AG04449 (cell line): ENCODE measurements at regions of chr20 and their contacts with region 1.

Region 1: DNA sequence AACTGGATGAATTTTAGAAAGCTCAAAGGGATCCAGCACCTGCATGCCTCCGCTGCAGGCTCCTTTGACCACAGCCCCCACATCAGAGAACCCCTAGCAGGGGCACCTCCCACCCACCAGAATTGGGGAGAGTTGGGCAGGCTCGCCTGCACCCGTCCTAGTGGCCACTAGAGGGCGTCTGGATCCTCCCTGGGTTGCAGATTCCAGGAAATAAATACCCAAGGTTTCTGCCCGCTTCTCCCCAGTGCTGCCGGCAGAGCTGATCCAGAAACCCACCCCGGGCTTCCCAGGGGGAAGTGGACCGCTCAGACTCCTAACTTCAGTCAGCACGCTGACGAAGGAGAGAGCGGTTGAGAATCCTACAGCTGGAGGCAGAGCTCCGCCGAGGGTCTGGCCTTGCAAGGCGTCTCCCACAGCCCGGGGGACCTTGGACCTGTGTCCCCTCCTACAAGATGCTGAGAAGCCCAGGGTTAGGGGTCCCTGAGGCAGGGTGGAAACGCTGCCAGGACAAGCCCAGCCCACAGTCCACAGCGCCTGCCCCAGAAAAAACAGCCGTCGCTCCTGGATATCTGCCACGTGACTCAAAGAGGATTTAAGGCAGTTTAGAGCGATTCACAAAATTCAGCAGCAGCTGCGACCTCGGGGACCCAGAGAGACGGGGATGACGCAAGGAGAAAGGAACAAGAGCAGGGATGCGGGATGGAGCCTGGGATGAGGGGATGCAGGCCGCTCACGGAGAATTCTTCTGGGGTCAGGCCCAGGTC is 32.6 kb upstream of the PHACTR3 start:
- DNase-seq: no peak
- H3K4me3 ChIP-seq: peak overlapping the region; percentile 46
- CTCF ChIP-seq: peak; percentile 91

Region 2: GRCh38 chr20:59560588-59561227 is 11.0 kb before region 1 on chr20:
- CTCF ChIA-PET with region 1: interaction called, 57 read pairs
- POLR2A ChIA-PET with region 1: no interaction called
- DNase-seq: no peak
- H3K4me3 ChIP-seq: no peak overlapping the region
- CTCF ChIP-seq: peak; percentile 47

Region 3: DNA sequence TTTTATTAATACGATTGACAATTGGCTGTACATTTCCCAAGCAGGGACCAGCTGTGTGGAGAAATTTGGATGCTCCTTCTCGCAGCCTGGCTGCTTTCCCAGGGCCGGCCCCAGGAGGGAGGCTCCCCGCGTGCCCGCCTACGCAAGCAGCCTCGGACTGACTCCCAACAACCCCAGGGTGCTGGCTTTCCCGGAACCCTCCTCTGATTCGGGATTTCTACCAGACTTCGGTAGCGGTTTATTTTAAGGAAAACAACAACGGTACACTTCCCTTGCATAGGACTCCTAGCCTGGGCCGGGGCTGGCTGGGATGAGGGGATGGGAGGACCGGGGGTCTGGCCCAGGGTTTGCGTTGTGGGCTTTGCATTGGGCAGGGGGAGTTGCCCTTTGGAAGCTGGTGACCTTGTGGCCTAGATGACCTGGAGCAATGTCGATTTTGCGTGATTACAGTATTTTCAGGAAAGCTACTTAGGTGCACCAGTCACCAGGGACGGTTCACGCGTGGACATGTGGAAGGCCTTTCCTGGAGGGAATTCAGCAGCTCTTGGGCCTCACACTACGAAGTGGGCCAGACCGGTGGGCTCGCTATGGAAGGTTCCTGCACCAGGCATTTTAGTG is 11.8 kb after region 1 on chr20:
- CTCF ChIA-PET with region 1: interaction called, 33 read pairs
- POLR2A ChIA-PET with region 1: no interaction called
- DNase-seq: no peak
- H3K4me3 ChIP-seq: no peak overlapping the region
- CTCF ChIP-seq: no peak

Region 4: DNA sequence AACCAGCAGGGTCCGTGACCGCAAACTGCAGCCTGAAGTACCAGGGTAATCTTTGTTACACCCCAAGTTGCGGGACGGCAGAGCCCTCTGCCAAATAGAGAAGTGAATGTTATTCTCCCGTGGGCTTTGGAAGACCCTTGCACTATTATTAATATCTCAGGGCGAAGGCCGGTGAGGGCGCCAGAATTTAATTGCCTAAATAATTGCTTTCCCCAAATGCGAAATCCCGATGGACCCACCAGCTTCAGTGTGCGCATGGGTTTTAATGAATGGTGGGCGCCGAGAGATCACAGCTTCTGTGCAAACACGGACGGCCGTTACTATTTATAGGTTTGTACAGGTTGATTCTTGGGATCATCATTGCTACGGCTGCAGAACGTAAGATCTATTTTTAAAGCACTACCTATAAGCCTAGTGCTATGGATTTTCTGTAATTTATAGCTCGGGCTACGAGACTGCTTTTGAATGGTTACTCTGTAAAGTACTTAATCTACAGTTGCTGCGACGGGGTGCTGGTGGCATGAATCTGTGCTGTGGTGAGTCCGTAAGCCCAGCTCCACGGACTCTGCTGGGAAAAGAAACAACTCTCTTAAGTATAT is 17.5 kb after region 1 on chr20:
- CTCF ChIA-PET with region 1: interaction called, 21 read pairs
- POLR2A ChIA-PET with region 1: no interaction called
- DNase-seq: no peak
- H3K4me3 ChIP-seq: no peak overlapping the region
- CTCF ChIP-seq: no peak

Region 5: GRCh38 chr20:59605165-59606042 is 33.7 kb after region 1 on chr20:
- CTCF ChIA-PET with region 1: interaction called, 10 read pairs
- POLR2A ChIA-PET with region 1: no interaction called
- DNase-seq: no peak
- H3K4me3 ChIP-seq: no peak overlapping the region
- CTCF ChIP-seq: no peak

Region 6: GRCh38 chr20:59739543-59739942 is 167.8 kb after region 1 on chr20:
- CTCF ChIA-PET with region 1: no interaction called
- POLR2A ChIA-PET with region 1: no interaction called
- DNase-seq: no peak
- H3K4me3 ChIP-seq: no peak overlapping the region
- CTCF ChIP-seq: no peak

Region 7: DNA sequence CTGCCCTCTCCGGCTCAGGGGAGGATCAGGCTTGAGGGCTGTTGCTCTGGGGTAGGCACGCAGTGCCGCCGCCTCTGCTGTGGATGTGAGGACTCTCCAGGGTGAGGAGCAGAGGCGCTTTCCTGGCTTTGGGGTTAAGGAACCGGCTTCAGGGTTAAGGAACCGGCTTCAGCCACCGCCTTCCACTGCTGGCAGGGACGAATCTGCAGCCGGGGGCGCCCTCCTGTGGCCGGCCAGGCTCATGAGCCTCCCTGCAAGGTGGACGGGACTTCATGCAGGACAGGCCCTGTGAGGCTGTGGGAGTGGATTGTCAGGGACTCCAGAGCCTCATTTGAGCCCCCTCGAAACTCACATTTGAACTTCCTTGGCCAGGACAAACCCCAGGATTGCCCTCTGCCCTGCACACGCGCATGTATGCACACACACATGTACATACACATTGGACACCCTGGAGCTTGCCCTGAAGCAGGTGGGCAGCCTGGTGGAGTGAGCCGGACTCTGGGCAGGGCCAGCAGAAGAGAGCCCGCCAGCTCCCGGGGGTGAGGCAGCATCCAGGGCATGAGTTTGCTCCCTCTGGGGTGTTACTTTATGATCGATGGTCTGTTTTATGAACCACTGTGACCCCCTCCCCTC is 179.4 kb after region 1 on chr20:
- CTCF ChIA-PET with region 1: interaction called, 147 read pairs
- POLR2A ChIA-PET with region 1: no interaction called
- DNase-seq: peak; percentile 9
- H3K4me3 ChIP-seq: no peak overlapping the region
- CTCF ChIP-seq: peak; percentile 95

Region 8: DNA sequence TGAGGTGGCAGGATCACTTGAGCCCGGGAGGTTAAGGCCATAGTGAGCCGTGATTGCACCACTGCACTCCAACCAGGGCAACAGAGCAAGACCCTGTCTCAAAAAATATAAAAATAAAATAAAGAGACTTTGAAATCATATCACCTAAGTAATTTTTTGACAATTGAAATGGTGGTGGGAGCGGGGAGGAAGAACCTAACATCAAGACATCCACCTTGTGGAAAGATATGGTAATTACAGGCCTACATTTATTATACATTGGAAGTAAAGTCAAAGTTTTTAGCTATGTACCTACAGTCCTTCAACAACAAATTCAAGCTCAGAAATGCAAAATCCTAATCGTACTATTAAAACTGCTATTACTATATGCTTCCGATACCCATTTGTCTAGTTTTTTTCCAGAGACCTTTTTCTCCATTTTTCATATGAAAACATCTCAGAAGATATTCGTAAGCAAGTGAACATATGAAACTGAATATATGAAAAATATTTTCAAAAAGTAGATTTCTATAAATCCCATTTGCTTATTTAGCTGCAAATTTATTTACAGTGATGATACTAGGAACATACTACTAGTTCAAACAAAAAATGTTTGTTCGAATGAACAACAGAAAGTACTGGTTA is 278.4 kb after region 1 on chr20:
- CTCF ChIA-PET with region 1: interaction called, 19 read pairs
- POLR2A ChIA-PET with region 1: no interaction called
- DNase-seq: no peak
- H3K4me3 ChIP-seq: no peak overlapping the region
- CTCF ChIP-seq: peak; percentile 13